ENCODE measurements at regions of chr9 and their contacts with region 1.

Region 1: DNA sequence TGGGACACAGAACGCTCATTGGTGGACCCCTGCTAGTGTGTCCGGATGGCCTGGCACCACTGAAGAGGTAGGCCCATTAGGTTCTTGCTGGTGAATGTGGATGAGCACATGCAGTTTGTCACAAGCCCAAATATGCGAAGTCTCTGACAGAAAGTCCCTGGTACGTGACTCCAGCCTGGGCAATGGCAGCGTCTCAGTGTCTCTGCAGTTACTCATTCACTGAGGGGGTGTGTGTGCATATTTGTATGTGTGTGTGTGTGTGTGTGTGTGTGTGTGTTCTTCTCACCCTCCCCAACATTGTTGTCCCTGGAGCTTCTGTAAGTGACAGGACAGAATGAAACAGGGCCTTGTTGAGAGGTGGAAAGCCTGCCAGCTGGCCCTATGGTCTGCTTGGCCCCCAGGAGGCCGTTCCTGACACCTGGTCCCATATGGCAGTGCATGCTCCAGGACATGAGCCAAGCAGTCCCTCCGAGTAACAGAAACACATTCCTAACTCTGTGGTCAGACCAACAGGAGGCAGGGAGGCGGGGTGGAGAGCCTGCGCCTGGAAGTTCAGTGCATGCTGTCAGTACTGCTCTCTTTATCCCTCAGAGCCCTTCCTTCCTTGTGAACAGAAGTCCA is 169.9 kb downstream of the SLC28A3 start:
- DNase-seq: peak in 1 of 42 donors; percentile 5

Region 2: DNA sequence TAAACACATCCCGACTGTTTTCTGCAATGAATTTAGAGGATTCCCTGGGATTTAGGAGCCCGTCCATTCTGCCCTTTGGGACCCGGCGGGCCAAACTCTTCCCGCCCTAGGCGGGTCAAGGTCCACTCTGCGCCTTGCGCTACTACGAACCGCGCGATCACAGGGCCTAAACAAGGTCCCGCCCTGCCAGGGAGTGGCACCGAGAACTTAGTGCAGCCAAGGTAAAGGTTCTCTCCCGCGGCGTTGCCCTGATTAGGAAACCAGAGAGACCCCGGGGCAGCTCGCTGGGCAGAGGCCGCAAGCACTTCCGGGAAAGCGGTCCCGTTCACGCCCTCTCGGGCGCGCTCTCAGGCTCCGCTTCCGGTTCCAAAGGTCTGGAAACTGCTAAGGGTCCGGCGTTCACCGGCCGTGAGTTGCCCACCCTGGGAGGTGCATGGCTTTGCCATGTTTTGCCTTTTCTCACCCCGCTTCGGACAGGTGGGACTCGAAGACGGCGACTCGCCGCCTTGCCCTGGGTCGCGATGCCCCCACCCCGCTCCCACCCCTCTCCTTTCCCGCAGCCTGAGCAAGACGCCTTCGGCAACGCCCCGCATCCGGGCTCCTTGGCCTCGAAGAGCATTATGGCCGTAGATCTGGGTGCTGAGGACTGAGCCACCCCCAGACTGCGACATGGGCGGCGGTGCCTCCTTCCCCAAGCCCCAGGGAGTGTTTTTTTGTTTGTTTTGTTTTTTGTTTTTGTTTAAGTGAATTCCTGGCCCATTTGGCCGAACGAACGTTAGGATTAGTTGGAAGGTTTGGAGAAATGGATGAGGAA is 214.0 kb before region 1 on chr9:
- intact Hi-C with region 1: loop called (anchors 10 kb)
- DNase-seq: peak; percentile 52 to 89 (median 78)

Region 3: DNA sequence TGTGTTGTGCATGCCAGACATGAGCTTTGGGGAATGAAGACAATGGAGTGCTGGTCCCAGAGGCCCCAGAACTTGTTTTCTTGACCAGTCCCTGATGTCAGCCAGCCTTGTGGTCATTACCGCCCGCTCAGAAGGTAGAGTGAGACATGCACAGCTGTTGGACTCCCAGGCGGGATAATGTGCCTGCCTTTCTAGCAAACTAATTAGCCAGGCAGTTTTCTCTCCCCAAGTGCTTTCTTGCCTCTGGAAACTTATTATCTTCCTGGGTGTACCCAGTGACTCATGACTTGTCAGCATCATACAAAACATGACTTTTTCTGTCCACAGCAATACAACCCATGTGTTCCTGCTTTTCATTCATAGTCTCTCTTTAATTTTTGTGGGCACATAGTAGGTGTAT is 58.9 kb before region 1 on chr9:
- intact Hi-C with region 1: no loop called
- DNase-seq: no peak